Gastrocnemius medialis (tissue), 4 donors: ENCODE measurements at regions of chr2 and their contacts with region 1.

Region 1: GRCh38 chr2:121220995-121221394 is 64.0 kb downstream of the TFCP2L1 start:
- DNase-seq: no peak
- ATAC-seq: no peak
- H3K4me3 ChIP-seq: no peak overlapping the region
- H3K27ac ChIP-seq: no peak overlapping the region
- H3K4me1 ChIP-seq: no peaks in the 10 kb centered on the region
- H3K27me3 ChIP-seq: no peaks in the 10 kb centered on the region
- CTCF ChIP-seq: no peak
- POLR2A ChIP-seq: no peak

Region 2: DNA sequence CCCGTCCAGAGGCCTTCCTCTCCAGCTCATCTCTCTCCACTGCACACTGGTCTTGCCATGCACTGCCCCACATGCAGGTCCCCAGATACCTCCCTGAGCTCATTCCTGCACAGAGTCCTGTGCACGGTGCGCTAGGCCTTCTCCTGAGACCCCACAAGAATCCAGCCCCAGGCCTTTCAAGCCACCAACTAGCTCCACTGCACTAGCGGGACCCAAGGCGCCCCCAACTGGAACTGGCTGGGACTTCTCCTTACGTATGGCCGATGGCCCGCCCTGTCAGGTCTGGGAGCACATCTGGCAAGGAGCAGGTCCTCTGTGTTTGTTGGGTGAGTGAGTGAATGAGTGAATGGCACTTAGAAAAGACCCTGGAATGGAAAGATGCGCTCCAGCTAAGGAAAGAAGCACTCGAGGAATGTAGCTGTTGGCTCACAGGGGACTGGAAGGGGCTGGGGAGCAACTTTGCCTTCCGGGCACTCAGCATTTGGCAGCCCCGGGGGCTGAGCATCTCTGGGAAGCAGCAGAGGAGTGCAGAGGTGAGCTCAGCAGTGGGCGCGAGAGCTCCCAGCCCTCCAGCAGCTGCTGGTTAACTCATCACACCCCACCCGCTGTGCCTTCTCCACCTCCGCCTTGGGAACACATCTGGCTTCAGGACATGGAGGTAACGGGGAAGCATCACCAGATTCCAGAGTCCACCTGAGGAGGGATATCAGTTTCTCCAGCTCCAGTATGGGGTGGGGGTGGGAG is 262.2 kb before region 1 on chr2:
- in situ Hi-C with region 1: no loop called
- intact Hi-C with region 1: no loop called
- DNase-seq: no peak
- ATAC-seq: no peak
- H3K4me3 ChIP-seq: no peak overlapping the region
- H3K27ac ChIP-seq: no peak overlapping the region
- H3K4me1 ChIP-seq: no peaks in the 10 kb centered on the region
- H3K27me3 ChIP-seq: no peaks in the 10 kb centered on the region
- CTCF ChIP-seq: peak in 2 of 5 experiments; percentile 11 to 14
- POLR2A ChIP-seq: no peak

Region 3: GRCh38 chr2:121147766-121148165 is 73.2 kb before region 1 on chr2:
- in situ Hi-C with region 1: no loop called
- intact Hi-C with region 1: loop called (anchors 10 kb)
- DNase-seq: no peak
- ATAC-seq: no peak
- H3K4me3 ChIP-seq: no peak overlapping the region
- H3K27ac ChIP-seq: no peak overlapping the region
- H3K4me1 ChIP-seq: peaks cover 0 to 14% of the 10 kb centered on the region in 2 donors
- H3K27me3 ChIP-seq: no peaks in the 10 kb centered on the region
- CTCF ChIP-seq: no peak
- POLR2A ChIP-seq: no peak

Region 4: DNA sequence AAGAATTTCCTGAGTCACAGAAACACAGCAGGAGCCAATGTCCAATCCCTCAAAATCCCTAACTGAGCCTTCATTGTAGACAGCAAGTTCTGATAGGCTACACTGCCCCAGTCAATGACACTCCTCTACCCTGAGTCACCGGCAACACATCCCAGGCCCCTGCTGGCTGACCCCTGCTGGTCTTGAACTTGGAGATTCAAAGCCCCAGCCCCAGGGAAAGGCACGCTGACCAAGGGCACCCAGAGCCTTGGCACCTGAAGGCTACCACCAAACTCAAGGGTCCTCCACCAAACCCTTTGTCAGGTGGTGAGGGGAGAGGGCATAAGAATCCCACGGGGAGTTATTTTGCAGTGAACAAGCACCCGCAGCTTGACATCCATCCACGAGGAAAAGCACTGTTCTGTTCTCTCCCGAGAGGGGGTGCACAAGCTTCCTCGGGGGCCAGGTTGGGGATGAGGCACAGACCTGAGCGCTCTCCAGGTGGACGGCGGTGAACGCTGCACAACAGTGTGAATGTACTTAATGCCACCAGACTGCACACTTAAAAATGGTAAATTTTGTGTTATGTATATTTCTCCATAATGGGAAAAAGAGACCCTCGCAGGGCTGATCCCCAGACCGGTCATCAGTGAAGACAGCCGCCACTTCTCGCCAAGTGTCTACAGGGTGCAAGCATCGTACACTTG is 17.1 kb after region 1 on chr2:
- in situ Hi-C with region 1: no loop called
- intact Hi-C with region 1: no loop called
- DNase-seq: no peak
- ATAC-seq: no peak
- H3K4me3 ChIP-seq: no peak overlapping the region
- H3K27ac ChIP-seq: no peak overlapping the region
- H3K4me1 ChIP-seq: no peaks in the 10 kb centered on the region
- H3K27me3 ChIP-seq: no peaks in the 10 kb centered on the region
- CTCF ChIP-seq: no peak
- POLR2A ChIP-seq: no peak